ENCODE measurements at regions of chr5 and their contacts with region 1.

Region 1: DNA sequence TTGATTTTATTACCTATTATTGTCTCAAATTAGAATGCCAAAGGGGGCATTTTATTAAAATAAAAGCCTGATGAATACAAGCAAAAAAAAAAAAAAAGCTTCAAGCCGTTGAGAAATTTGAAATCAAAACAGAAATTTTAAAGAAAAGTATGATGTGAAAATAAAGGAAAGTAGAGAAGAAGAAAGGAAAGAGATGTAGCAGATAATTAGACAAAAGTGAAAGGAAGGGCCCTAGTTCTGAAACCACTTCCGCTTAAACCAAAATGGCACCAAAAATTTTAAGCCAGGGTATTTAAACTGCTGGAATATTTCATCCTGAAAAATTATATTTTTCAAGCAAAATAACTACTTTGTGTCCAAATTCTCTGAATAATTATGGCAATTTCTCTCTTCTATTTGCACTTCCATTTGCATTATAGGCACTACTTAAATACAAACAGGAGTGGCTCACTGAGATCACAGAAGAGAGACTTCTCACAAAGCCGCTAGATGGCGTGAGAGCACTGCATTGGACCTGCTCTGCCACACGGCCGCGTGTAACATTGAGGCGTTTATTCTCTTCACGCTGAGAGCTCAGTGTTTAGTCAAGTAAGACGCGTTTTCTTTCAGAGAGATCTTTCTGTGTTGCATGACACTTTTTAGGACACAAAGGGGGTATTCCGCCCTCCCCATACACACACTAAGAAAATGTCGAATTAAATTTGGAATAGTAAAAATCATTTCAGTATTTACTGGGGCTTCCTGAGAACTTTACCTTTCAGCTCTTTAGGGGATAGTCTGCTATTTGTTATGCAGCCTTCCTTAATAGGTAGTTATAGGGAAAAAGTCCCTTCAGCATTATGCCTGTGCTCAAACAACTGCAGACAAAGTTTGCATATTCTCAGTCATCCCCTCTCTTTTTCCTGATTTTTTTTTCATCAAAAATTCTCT is 368.4 kb upstream of the CCNH start:
- DNase-seq: peak; percentile 82 to 93 (median 92)
- H3K4me3 ChIP-seq: no peak overlapping the region
- H3K27ac ChIP-seq: no peak overlapping the region
- H3K4me1 ChIP-seq: no peaks in the 10 kb centered on the region
- H3K27me3 ChIP-seq: peaks cover 5 to 49% (median 16%) of the 10 kb centered on the region in 5 experiments

Region 2: DNA sequence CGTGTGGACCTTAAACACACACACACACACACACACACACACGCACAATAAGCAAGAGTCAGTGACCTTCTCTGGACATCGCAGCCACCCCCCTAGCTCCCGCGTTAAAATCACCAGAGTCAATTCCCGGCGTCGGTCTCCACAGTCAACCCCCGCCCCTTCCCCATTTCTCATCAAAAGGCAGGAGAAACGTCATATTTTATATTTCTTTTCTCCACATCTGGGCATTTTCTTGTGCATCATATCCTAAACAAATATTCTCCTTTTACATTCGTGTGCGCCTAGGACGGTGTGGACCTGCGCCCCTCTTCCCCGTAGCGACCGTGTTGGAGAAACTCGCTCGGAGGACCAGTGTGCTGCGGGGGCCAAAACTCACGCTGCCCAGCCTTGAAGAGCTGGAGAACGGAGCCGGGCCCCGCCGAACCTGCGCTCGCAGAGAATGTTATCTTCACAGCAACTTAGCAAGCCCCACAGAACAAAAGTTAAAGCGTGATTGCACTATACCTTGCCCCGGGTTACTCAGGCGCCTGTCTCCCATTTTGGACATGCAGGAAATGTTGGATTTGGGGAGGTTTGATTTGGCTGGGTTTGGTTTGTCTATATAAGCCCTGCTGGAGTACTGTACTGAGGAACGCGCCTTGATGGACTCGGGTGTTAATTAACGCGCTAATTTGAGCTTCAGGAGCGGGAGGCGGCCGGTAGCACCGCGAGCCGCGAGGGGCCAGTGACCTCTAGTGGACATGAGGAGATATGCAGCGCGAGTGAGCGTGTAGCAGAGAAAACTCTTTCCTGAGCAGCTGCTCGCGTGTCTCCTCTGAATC is 909.5 kb after region 1 on chr5:
- CTCF ChIA-PET with region 1: interaction called, 53 read pairs
- POLR2A ChIA-PET with region 1: no interaction called
- DNase-seq: peak; percentile 78 to 85 (median 84)
- H3K4me3 ChIP-seq: peak overlapping the region in 4 of 7 experiments; percentile 26 to 54 (median 34)
- H3K27ac ChIP-seq: no peak overlapping the region
- H3K4me1 ChIP-seq: peaks cover 0 to 19% (median 15%) of the 10 kb centered on the region in 4 experiments
- H3K27me3 ChIP-seq: peaks cover 42 to 100% (median 85%) of the 10 kb centered on the region in 5 experiments

Region 3: GRCh38 chr5:88724201-88724600 is 943.1 kb after region 1 on chr5:
- CTCF ChIA-PET with region 1: interaction called, 16 read pairs
- POLR2A ChIA-PET with region 1: no interaction called
- DNase-seq: peak in 2 of 3 donors; percentile 33 to 34
- H3K4me3 ChIP-seq: no peak overlapping the region
- H3K27ac ChIP-seq: no peak overlapping the region
- H3K4me1 ChIP-seq: no peaks in the 10 kb centered on the region
- H3K27me3 ChIP-seq: no peaks in the 10 kb centered on the region